HEK293 (cell line): ENCODE measurements at regions of chr7 and their contacts with region 1.

Region 1: GRCh38 chr7:93622036-93623033 is 47.8 kb upstream of the CALCR start:
- H3K4me3 ChIP-seq: no peak overlapping the region
- H3K27ac ChIP-seq: no peak overlapping the region
- H3K4me1 ChIP-seq: peaks cover 2% of the 10 kb centered on the region; the same call in 1 of the 2 replicates
- CTCF ChIP-seq: no peak; the same call in 1 of the 2 replicates

Region 2: GRCh38 chr7:93632371-93632770 is 10.0 kb after region 1 on chr7:
- CTCF ChIA-PET with region 1: interaction called, 11 read pairs
- POLR2A ChIA-PET with region 1: no interaction called
- H3K4me3 ChIP-seq: no peak overlapping the region
- H3K27ac ChIP-seq: no peak overlapping the region
- H3K4me1 ChIP-seq: peaks cover 4% of the 10 kb centered on the region; the same call in 1 of the 2 replicates
- CTCF ChIP-seq: no peak

Region 3: GRCh38 chr7:93779115-93779514 is 156.8 kb after region 1 on chr7:
- CTCF ChIA-PET with region 1: no interaction called
- POLR2A ChIA-PET with region 1: no interaction called
- H3K4me3 ChIP-seq: no peak overlapping the region
- H3K27ac ChIP-seq: no peak overlapping the region
- H3K4me1 ChIP-seq: no peaks in the 10 kb centered on the region
- CTCF ChIP-seq: no peak